ENCODE measurements at regions of chr1 and their contacts with region 1.

Region 1: DNA sequence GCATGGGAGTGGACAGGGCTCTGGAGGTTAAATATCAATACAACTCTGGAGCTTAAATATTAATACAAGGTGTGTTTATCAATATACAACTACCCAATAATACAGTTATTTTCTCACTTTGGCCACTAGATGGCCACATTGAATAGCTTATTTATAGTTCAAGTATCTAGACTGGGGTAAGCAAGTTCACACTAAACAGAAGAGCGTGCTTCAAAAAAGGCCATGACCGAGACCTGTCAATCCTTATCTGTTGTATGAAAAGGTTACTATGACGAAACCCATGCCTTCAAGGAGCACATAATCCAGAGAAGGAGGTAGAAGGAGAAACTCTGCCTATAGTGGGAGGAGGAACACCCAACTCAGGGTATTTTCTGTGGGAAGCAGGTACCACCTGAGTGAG is 29.1 kb downstream of the CHML start:
- DNase-seq: no peak
- H3K4me3 ChIP-seq: no peak overlapping the region
- H3K27ac ChIP-seq: no peak overlapping the region
- H3K4me1 ChIP-seq: no peaks in the 10 kb centered on the region
- H3K27me3 ChIP-seq: no peaks in the 10 kb centered on the region
- CTCF ChIP-seq: peak in 2 of 3 experiments; percentile 34 to 48; a peak in 2 of 4 replicates
- EP300 ChIP-seq: no peak
- POLR2A ChIP-seq: no peak
- RAD21 ChIP-seq: peak; percentile 73

Region 2: DNA sequence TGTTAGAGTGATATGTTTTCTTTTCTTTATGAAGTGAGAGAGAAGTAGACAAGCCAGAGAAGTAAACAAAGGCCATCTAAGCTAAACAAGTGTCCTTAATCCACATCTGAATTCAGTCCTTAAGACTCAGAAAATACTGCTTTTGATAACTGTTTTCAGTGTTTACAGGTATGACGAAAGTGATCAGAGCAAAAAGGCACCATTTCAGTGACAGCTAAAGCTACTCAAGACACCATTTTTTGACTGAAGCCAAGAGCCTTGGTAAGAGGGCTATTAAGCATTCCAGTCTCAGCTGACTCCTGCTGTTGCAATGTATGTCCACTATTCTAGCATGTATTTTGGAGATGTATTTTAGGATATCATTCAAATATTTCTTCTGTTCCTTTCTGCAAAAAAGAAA is 74.8 kb before region 1 on chr1:
- CTCF ChIA-PET with region 1: interaction called, 11 read pairs
- POLR2A ChIA-PET with region 1: no interaction called
- DNase-seq: no peak
- H3K4me3 ChIP-seq: no peak overlapping the region
- H3K27ac ChIP-seq: no peak overlapping the region
- H3K4me1 ChIP-seq: no peaks in the 10 kb centered on the region
- H3K27me3 ChIP-seq: no peaks in the 10 kb centered on the region
- CTCF ChIP-seq: no peak
- EP300 ChIP-seq: no peak
- POLR2A ChIP-seq: no peak
- RAD21 ChIP-seq: no peak

Region 3: DNA sequence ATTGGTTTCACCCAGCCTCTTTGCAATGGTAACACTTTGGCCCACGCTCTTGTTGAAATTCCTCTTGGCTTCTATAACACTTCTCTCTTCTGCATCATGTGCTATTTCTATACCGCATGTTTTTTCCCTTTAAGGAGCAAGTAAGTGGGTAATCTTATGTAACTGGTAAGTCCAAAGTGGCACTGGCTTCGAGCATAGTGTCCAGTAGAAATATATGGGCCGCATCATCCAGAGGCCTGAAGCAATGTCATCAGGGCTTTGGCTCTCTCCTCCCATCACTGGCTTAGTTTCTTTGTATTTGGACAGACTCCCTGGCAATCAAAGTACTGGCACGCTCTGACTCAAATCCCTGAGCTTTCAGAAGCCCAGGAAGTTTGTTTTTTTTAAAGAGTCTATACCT is 11.6 kb after region 1 on chr1:
- CTCF ChIA-PET with region 1: interaction called, 43 read pairs
- POLR2A ChIA-PET with region 1: interaction called, 3 read pairs
- DNase-seq: no peak
- H3K4me3 ChIP-seq: no peak overlapping the region
- H3K27ac ChIP-seq: no peak overlapping the region
- H3K4me1 ChIP-seq: no peaks in the 10 kb centered on the region; a peak in 2 of 7 replicates
- H3K27me3 ChIP-seq: peaks cover 0 to under 1% (median 0%) of the 10 kb centered on the region in 4 experiments; a peak in 1 of 7 replicates
- CTCF ChIP-seq: no peak
- EP300 ChIP-seq: no peak
- POLR2A ChIP-seq: no peak
- RAD21 ChIP-seq: no peak

Region 4: GRCh38 chr1:241782396-241782795 is 171.3 kb after region 1 on chr1:
- CTCF ChIA-PET with region 1: interaction called, 10 read pairs
- POLR2A ChIA-PET with region 1: no interaction called
- DNase-seq: no peak
- H3K4me3 ChIP-seq: no peak overlapping the region
- H3K27ac ChIP-seq: no peak overlapping the region
- H3K4me1 ChIP-seq: no peaks in the 10 kb centered on the region
- H3K27me3 ChIP-seq: no peaks in the 10 kb centered on the region
- CTCF ChIP-seq: no peak
- EP300 ChIP-seq: no peak
- POLR2A ChIP-seq: no peak
- RAD21 ChIP-seq: no peak

Region 5: GRCh38 chr1:241834733-241835377 is 223.8 kb after region 1 on chr1:
- CTCF ChIA-PET with region 1: interaction called, 22 read pairs
- POLR2A ChIA-PET with region 1: interaction called, 3 read pairs
- DNase-seq: no peak
- H3K4me3 ChIP-seq: no peak overlapping the region
- H3K27ac ChIP-seq: no peak overlapping the region
- H3K4me1 ChIP-seq: no peaks in the 10 kb centered on the region
- H3K27me3 ChIP-seq: no peaks in the 10 kb centered on the region
- CTCF ChIP-seq: peak in 2 of 3 experiments; percentile 57 to 61; a peak in 3 of 4 replicates
- EP300 ChIP-seq: no peak
- POLR2A ChIP-seq: no peak
- RAD21 ChIP-seq: peak; percentile 77 to 79

Measured in H1 (cell line).